ENCODE measurements at regions of chr6 and their contacts with region 1.

Region 1: GRCh38 chr6:127464881-127465459 is 5.8 kb upstream of the KIAA0408 start:
- H3K4me3 ChIP-seq: no peak overlapping the region
- H3K27ac ChIP-seq: no peak overlapping the region
- H3K4me1 ChIP-seq: peaks cover 3% of the 10 kb centered on the region; the same call in 1 of the 2 replicates
- CTCF ChIP-seq: peak; percentile 59; the same call in 1 of the 2 replicates

Region 2: GRCh38 chr6:127342946-127343808 is 121.8 kb before region 1 on chr6 and contains the start of gene ECHDC1:
- CTCF ChIA-PET with region 1: no interaction called
- POLR2A ChIA-PET with region 1: no interaction called
- H3K4me3 ChIP-seq: peak within 1 kb of the TSS; percentile 66
- H3K27ac ChIP-seq: peak within 1 kb of the TSS; percentile 71
- H3K4me1 ChIP-seq: peaks cover 20% of the 10 kb centered on the region
- CTCF ChIP-seq: no peak; the same call in 1 of the 2 replicates

Region 3: GRCh38 chr6:127397729-127398630 is 67.0 kb before region 1 on chr6:
- CTCF ChIA-PET with region 1: no interaction called
- POLR2A ChIA-PET with region 1: no interaction called
- H3K4me3 ChIP-seq: no peak overlapping the region
- H3K27ac ChIP-seq: no peak overlapping the region
- H3K4me1 ChIP-seq: no peaks in the 10 kb centered on the region
- CTCF ChIP-seq: no peak

Region 4: DNA sequence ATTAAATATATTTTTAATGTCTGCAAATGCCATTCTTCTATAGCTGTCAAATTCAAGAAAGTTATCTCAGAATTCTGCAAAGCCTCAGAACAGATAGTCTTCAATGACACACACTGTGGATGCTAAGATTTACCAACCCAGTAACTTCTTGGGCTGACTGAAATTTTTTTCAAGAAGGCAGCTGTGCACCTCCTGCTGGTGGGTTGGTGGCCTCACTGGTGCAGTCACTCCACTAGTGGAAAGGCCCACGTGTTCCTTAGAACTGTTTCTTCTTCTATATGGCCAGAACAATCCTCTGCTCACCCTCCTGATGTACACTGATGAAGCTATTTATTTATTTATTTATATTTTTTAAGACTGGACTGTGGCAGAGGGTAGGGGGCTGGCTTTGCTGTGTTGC is 82.2 kb after region 1 on chr6:
- CTCF ChIA-PET with region 1: interaction called, 15 read pairs
- POLR2A ChIA-PET with region 1: no interaction called
- H3K4me3 ChIP-seq: no peak overlapping the region
- H3K27ac ChIP-seq: no peak overlapping the region
- H3K4me1 ChIP-seq: no peaks in the 10 kb centered on the region
- CTCF ChIP-seq: no peak